ENCODE measurements at regions of chr5 and their contacts with region 1.

Region 1: GRCh38 chr5:139293504-139294373 is at the start of gene MATR3:
- DNase-seq: peak; percentile 93 to 97 (median 94)
- ATAC-seq: peak; percentile 86
- H3K4me3 ChIP-seq: peak within 1 kb of the TSS; percentile 88
- H3K27ac ChIP-seq: peak within 1 kb of the TSS; percentile 99
- H3K4me1 ChIP-seq: peaks cover 17 to 27% of the 10 kb centered on the region in 2 experiments; a peak in 4 of 5 replicates
- H3K27me3 ChIP-seq: no peaks in the 10 kb centered on the region
- CTCF ChIP-seq: no peak
- EP300 ChIP-seq: no peak; the same call in 1 of the 2 replicates
- POLR2A ChIP-seq: peak; percentile 98
- RAD21 ChIP-seq: no peak
- polyA plus RNA-seq, gene MATR3: 150 to 299 TPM

Region 2: GRCh38 chr5:139232147-139232724 is 61.5 kb before region 1 on chr5:
- CTCF ChIA-PET with region 1: no interaction called
- POLR2A ChIA-PET with region 1: no interaction called
- in situ Hi-C with region 1: no loop called
- intact Hi-C with region 1: no loop called
- DNase-seq: peak in 2 of 4 experiments; percentile 44 to 55
- ATAC-seq: peak; percentile 76
- H3K4me3 ChIP-seq: no peak overlapping the region
- H3K27ac ChIP-seq: no peak overlapping the region
- H3K4me1 ChIP-seq: no peaks in the 10 kb centered on the region
- H3K27me3 ChIP-seq: no peaks in the 10 kb centered on the region
- CTCF ChIP-seq: no peak
- EP300 ChIP-seq: peak; percentile 37; the same call in 1 of the 2 replicates
- POLR2A ChIP-seq: no peak
- RAD21 ChIP-seq: no peak

Region 3: DNA sequence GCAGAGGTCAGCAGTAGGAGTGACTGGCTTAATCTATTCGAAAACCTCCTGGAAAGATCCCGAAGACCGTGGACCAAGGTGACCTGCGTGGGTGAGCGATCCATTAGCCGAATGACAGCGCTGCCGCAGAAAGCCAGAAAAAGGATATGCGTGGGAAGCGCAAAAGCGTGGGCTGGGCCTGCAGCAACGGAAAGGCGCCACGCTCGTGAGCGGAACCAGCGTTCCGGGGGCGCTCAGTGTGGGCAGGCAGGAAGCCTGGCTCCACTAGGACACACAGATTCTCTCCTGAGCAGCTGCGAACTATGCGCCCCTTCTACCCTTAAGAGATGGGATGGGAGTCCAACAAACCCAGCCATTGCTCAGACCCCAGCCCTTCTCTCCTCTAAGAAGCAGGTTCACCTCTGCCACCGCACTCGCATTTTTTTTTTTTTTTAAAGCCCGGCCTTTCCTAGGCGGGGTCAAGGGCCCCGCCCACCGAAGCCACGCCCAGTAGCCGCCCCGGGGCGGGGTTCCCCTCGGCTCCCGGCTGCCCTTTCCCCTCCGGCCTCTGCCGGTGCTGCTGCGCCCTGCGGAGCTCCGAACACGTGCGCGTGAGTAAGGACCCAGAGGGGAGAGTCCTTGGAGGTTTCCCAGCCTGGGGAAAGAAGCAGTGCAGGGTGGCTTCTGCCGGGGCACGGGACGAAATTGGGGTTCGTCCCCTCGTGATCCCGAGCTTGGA is 20.0 kb before region 1 on chr5:
- CTCF ChIA-PET with region 1: no interaction called
- POLR2A ChIA-PET with region 1: interaction called, 38 read pairs
- in situ Hi-C with region 1: no loop called
- intact Hi-C with region 1: loop called (anchors 1 kb)
- DNase-seq: peak; percentile 94 to 98 (median 98)
- ATAC-seq: peak; percentile 92
- H3K4me3 ChIP-seq: peak overlapping the region; percentile 72
- H3K27ac ChIP-seq: peak overlapping the region; percentile 92
- H3K4me1 ChIP-seq: peaks cover 12 to 56% of the 10 kb centered on the region in 2 experiments
- H3K27me3 ChIP-seq: no peaks in the 10 kb centered on the region
- CTCF ChIP-seq: peak; percentile 6 to 30 (median 13); a peak in 2 of 6 replicates
- EP300 ChIP-seq: peak; percentile 58; the same call in 1 of the 2 replicates
- POLR2A ChIP-seq: peak; percentile 97
- RAD21 ChIP-seq: no peak

Region 4: DNA sequence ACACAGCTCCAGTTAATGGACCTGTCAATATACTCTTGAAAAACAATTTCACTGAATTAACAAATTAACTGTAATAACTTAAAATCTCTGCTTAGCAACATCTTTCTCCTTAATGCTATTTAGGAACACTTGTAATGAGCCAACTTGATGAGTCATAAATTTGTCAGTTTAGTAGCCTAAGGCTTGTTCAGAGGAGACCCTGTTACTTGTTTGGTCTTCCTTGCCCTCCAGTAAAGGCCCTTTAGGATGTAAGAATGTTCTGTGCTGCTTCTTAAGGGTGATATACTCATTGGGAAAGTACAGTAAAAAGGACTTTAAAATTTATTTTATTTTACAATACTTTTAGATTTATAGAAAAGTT is 11.6 kb before region 1 on chr5:
- CTCF ChIA-PET with region 1: no interaction called
- POLR2A ChIA-PET with region 1: interaction called, 38 read pairs
- in situ Hi-C with region 1: no loop called
- intact Hi-C with region 1: no loop called
- DNase-seq: no peak
- ATAC-seq: no peak
- H3K4me3 ChIP-seq: no peak overlapping the region
- H3K27ac ChIP-seq: peak overlapping the region; percentile 13; the same call in 1 of the 3 replicates
- H3K4me1 ChIP-seq: peaks cover 4 to 10% of the 10 kb centered on the region in 2 experiments; a peak in 4 of 5 replicates
- H3K27me3 ChIP-seq: no peaks in the 10 kb centered on the region
- CTCF ChIP-seq: no peak
- EP300 ChIP-seq: no peak
- POLR2A ChIP-seq: no peak; the same call in 1 of the 2 replicates
- RAD21 ChIP-seq: no peak

Region 5: GRCh38 chr5:139312075-139312474 is 18.3 kb after region 1 on chr5:
- CTCF ChIA-PET with region 1: no interaction called
- POLR2A ChIA-PET with region 1: interaction called, 105 read pairs
- in situ Hi-C with region 1: no loop called
- intact Hi-C with region 1: no loop called
- DNase-seq: no peak
- ATAC-seq: peak; percentile 8; the same call in 2 of the 3 replicates
- H3K4me3 ChIP-seq: no peak overlapping the region
- H3K27ac ChIP-seq: no peak overlapping the region
- H3K4me1 ChIP-seq: peaks cover 3% of the 10 kb centered on the region in 2 experiments; a peak in 3 of 5 replicates
- H3K27me3 ChIP-seq: no peaks in the 10 kb centered on the region
- CTCF ChIP-seq: no peak
- EP300 ChIP-seq: no peak
- POLR2A ChIP-seq: no peak
- RAD21 ChIP-seq: no peak

Region 6: DNA sequence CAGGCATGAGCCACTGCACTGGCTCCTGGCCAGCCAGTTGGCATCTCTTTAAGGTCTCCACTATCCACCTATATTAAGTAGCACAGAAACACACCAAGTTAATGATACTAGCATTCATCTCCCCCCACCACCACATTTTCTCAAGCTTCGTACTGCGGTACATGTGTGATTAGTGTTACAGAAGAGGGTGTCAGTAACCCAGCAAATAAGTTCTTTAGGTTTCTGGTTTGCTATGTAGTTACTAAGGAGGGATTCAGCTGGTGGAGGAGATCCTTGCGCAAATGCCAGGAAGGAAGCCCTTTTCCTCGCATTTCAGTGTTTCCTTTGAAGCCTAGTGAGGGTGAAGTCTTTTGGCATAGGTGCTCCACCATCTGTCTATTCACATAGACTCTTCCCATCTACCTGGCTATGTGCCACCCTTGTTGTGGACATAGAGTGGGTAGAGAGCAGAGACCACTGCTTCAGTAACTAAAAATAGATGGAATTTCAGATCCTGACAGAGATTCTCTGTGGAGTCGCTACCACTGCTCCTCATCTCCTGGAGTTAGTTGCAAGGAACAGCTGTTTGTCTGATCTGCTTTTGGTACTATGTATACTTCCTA is 284.1 kb after region 1 on chr5:
- CTCF ChIA-PET with region 1: no interaction called
- POLR2A ChIA-PET with region 1: no interaction called
- in situ Hi-C with region 1: no loop called
- intact Hi-C with region 1: no loop called
- DNase-seq: no peak
- ATAC-seq: no peak
- H3K4me3 ChIP-seq: no peak overlapping the region
- H3K27ac ChIP-seq: no peak overlapping the region
- H3K4me1 ChIP-seq: peaks cover 4% of the 10 kb centered on the region in 2 experiments; a peak in 3 of 5 replicates
- H3K27me3 ChIP-seq: no peaks in the 10 kb centered on the region
- CTCF ChIP-seq: no peak
- EP300 ChIP-seq: no peak
- POLR2A ChIP-seq: no peak
- RAD21 ChIP-seq: no peak